Gastrocnemius medialis (tissue), 4 donors: ENCODE measurements at regions of chr5 and their contacts with region 1.

Region 1: GRCh38 chr5:157718519-157718918 is 12.7 kb upstream of the THG1L start:
- DNase-seq: no peak
- ATAC-seq: peak in 1 of 2 donors; percentile 55
- H3K4me3 ChIP-seq: no peak overlapping the region
- H3K27ac ChIP-seq: no peak overlapping the region
- H3K4me1 ChIP-seq: peaks cover 0 to 3% of the 10 kb centered on the region in 2 donors
- H3K27me3 ChIP-seq: no peaks in the 10 kb centered on the region
- CTCF ChIP-seq: peak; percentile 31 to 62 (median 46)
- POLR2A ChIP-seq: no peak

Region 2: DNA sequence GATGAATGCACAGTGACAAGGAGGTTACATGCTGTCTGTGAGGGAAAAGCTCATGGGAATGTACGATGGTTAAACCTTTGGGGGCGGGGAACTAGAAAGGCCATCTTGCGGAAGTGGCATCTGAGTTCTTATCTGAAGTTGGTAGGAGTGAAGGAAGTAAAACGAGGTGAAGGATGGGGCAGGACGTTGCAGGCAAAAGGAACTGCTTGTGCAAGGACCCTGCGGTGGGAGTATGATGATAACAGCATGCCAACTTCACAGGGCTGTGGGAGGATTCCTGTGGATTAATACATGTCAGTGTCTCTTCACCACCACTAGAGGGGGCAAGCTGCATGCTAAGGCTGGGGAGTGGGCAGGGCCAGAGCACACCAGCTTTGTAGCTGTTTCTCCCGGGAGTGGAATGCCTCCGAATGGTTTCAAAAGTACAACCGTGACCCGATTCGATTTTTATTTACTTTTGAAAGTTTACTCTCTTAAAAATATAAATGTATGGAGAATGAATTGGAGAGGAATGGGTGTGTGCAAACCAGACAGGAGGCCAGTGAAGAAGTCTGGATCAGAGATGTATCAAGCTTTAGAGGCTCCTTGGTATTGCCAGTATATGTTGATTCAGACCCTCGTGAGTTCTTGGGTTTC is 390.1 kb before region 1 on chr5:
- in situ Hi-C with region 1: loop called (anchors 10 kb)
- intact Hi-C with region 1: loop called (anchors 1 kb)
- DNase-seq: peak; percentile 47 to 48
- ATAC-seq: peak; percentile 90 to 98
- H3K4me3 ChIP-seq: peak overlapping the region in 1 of 4 donors; percentile 7
- H3K27ac ChIP-seq: no peak overlapping the region
- H3K4me1 ChIP-seq: no peaks in the 10 kb centered on the region
- H3K27me3 ChIP-seq: no peaks in the 10 kb centered on the region
- CTCF ChIP-seq: peak; percentile 73 to 92 (median 79)
- POLR2A ChIP-seq: no peak

Region 3: GRCh38 chr5:157335534-157336422 is 382.7 kb before region 1 on chr5:
- in situ Hi-C with region 1: loop called in 2 of 4 experiments (anchors 10 kb)
- intact Hi-C with region 1: no loop called
- DNase-seq: no peak
- ATAC-seq: peak; percentile 62 to 63
- H3K4me3 ChIP-seq: no peak overlapping the region
- H3K27ac ChIP-seq: peak overlapping the region in 2 of 4 donors; percentile 10 to 31
- H3K4me1 ChIP-seq: no peaks in the 10 kb centered on the region
- H3K27me3 ChIP-seq: no peaks in the 10 kb centered on the region
- CTCF ChIP-seq: no peak
- POLR2A ChIP-seq: no peak

Region 4: DNA sequence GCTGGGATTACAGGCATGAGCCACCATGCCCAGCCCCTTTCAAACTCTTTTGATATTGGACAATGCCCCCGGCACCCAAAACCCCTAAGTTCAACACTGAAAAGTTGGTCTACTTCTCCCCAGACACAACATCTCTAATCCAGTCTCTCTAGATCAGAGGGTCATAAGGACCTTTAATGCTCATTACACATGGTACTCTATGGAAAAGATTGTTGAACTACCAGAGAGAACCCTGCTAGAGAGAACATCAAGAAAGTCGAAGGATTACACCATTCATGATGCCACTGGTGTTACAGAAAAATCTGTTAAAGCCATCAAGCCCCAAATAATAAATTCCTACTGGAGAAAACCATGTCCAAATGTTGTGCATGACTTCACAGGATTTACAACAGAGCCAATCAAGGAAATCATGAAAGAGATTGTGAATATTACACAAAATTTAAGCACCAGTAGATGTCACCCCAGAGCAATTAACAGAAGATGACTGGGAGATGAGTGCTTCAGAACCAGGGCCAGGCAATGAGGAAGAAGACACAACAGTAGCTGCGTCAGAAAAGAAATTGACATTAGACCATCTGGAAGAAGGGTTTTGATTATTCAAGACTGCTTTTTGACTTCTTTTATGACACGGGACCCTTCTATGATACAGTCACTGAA is 286.8 kb before region 1 on chr5:
- in situ Hi-C with region 1: loop called in 3 of 4 experiments (anchors 5 to 25 kb)
- intact Hi-C with region 1: loop called (anchors 1 kb)
- DNase-seq: peak in 1 of 2 donors; percentile 11
- ATAC-seq: peak; percentile 73 to 92
- H3K4me3 ChIP-seq: no peak overlapping the region
- H3K27ac ChIP-seq: no peak overlapping the region
- H3K4me1 ChIP-seq: no peaks in the 10 kb centered on the region
- H3K27me3 ChIP-seq: no peaks in the 10 kb centered on the region
- CTCF ChIP-seq: peak; percentile 32 to 50 (median 43)
- POLR2A ChIP-seq: no peak